ENCODE measurements at regions of chr2 and their contacts with region 1.

Region 1: DNA sequence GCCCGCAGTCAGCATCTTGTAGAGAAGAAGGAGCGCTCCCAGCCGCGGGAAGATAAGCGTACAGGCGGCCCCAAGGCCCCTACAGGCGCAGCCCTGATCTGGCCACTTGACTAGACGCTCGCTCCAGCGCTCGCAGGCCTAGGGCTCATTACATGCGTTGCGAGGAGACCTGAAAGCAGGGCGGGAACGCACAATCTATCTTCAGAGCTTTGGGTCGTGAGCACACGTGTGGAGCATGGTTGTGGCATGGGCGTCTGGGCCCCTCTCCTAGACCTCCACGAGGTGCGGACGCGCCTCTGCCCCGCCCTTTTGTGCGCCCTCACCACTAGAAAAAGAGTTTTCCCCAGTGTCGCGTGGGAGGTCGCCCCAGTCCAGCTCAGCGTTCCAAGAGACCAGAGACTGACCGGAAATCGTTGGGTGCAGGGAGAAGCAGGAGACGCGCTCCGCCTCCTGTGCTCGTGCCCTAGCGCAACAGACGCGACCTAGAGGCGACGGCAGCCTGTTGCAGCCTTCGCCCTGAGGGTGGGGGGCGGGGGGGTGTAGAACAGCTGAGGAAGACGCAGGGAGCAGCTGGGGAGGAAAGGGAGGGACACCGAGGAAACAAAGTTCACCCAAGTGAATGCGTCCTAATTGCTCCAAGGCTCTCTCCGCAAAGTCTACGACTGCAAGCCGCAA is 12.6 kb downstream of the NR4A2 start:
- DNase-seq: no peak
- H3K4me3 ChIP-seq: peak overlapping the region; percentile 59
- H3K27ac ChIP-seq: no peak overlapping the region
- H3K27me3 ChIP-seq: peaks cover 27% of the 10 kb centered on the region
- CTCF ChIP-seq: no peak

Region 2: DNA sequence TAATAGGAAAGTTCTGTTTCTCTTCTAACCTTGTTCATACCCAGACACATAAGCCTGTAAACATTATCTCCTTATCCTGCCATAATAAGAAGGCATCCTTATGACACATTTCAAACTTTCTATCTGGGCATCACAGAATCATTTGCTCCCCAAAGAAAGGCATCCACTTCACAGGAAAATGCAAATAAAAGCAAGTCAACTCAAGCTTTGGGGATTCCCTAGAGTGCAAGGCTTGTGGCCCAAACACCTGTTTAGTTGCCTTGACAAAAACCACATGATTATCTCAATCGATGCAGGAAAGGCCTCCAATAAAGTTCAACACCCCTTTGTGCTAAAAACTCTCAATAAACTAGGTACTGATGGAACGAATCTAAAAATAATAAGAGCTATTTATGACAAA is 741.9 kb after region 1 on chr2:
- CTCF ChIA-PET with region 1: interaction called, 14 read pairs
- POLR2A ChIA-PET with region 1: no interaction called
- DNase-seq: no peak
- H3K4me3 ChIP-seq: no peak overlapping the region
- H3K27ac ChIP-seq: no peak overlapping the region
- H3K27me3 ChIP-seq: no peaks in the 10 kb centered on the region
- CTCF ChIP-seq: no peak